Activated CD4-positive, alpha-beta memory T cell treated with anti-CD3 and anti-CD28 coated beads for 36 hours (primary cell): ENCODE measurements at regions of chr17 and their contacts with region 1.

Region 1: DNA sequence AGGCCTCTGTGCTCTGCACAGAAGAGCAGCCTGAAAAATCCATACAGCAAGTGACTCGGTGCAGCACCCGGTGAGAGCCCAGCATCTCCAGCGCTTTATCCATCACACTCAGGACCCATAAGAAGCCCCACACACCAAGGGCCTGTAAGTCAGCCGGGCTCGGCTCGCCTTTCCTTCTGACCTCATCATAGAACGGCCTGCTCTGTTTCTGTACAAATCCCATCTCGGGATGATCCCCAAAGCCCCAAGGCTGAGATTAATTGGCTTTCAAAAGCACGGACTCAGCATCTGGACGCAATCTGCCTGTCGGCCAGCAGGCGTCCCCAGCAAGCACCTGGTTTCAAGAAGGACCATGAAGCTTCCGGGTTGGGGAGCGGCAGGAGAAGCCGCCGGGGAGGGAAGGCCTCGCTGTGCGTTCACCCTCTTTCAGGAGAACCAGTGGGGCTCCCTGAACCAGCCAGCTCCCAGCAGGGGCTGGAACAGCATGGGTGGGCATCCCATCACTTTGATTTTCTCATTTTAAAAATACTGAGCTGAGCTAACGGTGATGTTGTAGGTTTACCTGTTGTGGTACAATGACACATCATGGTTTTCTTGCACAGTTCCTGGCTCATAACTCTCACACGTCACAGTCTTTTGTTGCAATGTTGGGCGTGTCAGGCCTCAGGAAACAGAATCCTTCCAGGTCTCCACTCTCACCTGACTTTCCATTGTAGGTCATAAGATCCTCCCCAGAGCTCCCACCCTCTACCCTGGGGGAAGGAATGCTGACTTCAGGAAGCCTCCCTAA is 6.7 kb downstream of the CCDC57 start:
- DNase-seq: peak; percentile 89
- H3K4me3 Mint-ChIP-seq: peak overlapping the region; percentile 63
- H3K27ac Mint-ChIP-seq: peak overlapping the region; percentile 93
- H3K4me1 Mint-ChIP-seq: peaks cover 53% of the 10 kb centered on the region
- H3K27me3 Mint-ChIP-seq: no peaks in the 10 kb centered on the region

Region 2: GRCh38 chr17:82129095-82129494 is 76.8 kb before region 1 on chr17:
- CTCF ChIA-PET with region 1: no interaction called
- POLR2A ChIA-PET with region 1: no interaction called
- intact Hi-C with region 1: loop called (anchors 5 kb)
- DNase-seq: no peak
- H3K4me3 Mint-ChIP-seq: no peak overlapping the region
- H3K27ac Mint-ChIP-seq: no peak overlapping the region
- H3K4me1 Mint-ChIP-seq: peaks cover 36% of the 10 kb centered on the region
- H3K27me3 Mint-ChIP-seq: no peaks in the 10 kb centered on the region

Region 3: DNA sequence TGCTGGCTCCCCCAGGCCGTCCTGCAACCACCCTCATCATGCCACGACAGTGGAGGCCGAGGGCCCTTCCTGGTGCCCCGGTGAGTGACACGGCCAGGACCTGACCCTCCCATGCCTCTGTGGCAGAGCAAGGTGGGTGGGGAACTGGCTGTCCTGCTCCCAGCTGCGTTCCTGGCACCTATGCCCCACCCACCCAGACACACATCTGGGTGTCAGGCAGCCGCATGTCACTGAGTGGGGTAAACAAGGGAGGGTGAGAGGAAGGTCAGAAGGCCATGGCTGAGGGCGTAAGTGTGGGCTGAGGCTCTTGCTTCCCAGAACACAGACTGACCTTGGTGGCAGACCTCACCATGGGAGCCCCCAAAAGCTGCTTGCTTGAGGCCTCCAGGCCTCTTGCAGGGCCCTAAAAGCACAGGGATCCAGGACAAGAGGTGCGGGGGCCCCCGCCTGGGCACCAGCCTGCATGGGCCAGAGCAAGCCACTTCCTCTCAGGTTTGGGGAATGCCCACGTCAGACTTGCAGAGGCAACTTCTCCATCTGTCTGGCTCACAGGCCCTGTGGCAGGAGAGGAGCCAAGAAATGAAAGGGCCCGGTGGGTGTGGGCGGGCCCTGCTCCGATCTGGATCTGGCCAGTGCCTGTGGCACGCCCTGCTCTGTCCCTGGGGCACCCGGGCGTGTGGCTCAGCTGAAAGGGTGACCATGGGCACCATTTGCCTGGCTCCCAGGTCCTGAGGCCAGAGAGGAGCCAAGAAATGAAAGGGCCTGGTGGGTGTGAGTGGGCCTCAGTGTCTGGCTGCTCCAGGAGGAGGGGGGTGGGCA is 10.6 kb after region 1 on chr17:
- CTCF ChIA-PET with region 1: interaction called, 7 read pairs
- POLR2A ChIA-PET with region 1: interaction called, 5 read pairs
- intact Hi-C with region 1: loop called (anchors 1 kb)
- DNase-seq: peak; percentile 85
- H3K4me3 Mint-ChIP-seq: no peak overlapping the region
- H3K27ac Mint-ChIP-seq: peak overlapping the region; percentile 76
- H3K4me1 Mint-ChIP-seq: peaks cover 33% of the 10 kb centered on the region
- H3K27me3 Mint-ChIP-seq: no peaks in the 10 kb centered on the region